MCF 10A (cell line): ENCODE measurements at regions of chr1 and their contacts with region 1.

Region 1: DNA sequence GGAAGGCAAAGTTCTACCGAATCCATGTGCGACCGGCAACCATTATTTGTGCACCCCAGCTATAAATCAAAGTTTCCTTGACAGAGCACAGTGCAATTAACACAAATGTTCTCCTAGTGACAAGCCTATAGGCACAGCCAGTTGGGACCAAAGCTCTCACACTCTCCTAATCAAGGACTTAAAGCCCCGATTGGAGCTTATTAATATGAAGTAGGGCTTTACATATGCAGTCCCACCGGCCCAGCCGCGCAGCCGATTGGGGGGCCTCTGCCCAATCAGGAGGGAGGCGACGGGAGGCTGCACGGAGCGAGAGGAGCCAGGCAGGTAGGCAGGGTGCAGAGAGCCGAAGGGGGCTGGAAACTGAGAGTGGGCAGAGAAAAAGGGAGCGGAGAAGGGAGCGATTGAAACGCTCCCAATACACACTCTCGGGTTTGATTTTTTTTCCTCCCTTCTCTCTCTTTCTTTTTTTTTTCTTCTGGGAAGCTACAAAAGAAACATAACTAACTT is at the start of gene ESRRG:
- DNase-seq: no peak
- H3K4me3 Mint-ChIP-seq: no peak within 1 kb of the TSS
- H3K27ac Mint-ChIP-seq: no peak within 1 kb of the TSS
- H3K4me1 Mint-ChIP-seq: peaks cover 8% of the 10 kb centered on the region
- H3K27me3 Mint-ChIP-seq: peaks cover 100% of the 10 kb centered on the region
- CTCF ChIP-seq: no peak
- total RNA-seq, gene ESRRG: 0.44 TPM in 1 of 2 replicates, not detected in the other

Region 2: DNA sequence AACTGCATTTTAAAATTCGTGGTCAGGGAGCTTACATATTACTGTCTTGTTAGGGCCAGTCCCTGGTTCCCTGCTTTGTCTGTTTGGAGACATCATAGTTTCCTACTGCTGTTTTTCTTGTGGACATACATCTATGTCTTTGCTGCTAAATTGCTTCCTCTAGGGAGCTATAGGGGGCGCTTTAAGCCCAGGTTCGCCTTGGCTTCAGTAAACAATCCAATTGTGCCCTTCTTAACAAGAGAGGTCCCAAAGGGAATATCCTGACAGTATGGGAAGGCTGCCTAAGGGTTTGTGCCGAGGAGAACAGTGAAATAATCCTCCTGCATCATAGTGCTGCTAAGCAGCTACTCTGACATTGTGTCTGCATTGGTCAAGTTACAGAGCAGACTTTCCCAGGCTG is 412.6 kb before region 1 on chr1:
- CTCF ChIA-PET with region 1: interaction called, 5 read pairs
- POLR2A ChIA-PET with region 1: no interaction called
- intact Hi-C with region 1: loop called (anchors 5 kb)
- DNase-seq: peak; percentile 75
- H3K4me3 Mint-ChIP-seq: no peak overlapping the region
- H3K27ac Mint-ChIP-seq: no peak overlapping the region
- H3K4me1 Mint-ChIP-seq: no peaks in the 10 kb centered on the region
- H3K27me3 Mint-ChIP-seq: peaks cover 77% of the 10 kb centered on the region
- CTCF ChIP-seq: peak; percentile 95

Region 3: GRCh38 chr1:216866714-216867113 is 143.4 kb after region 1 on chr1:
- CTCF ChIA-PET with region 1: no interaction called
- POLR2A ChIA-PET with region 1: no interaction called
- intact Hi-C with region 1: no loop called
- DNase-seq: no peak
- H3K4me3 Mint-ChIP-seq: no peak overlapping the region
- H3K27ac Mint-ChIP-seq: no peak overlapping the region
- H3K4me1 Mint-ChIP-seq: no peaks in the 10 kb centered on the region
- H3K27me3 Mint-ChIP-seq: no peaks in the 10 kb centered on the region
- CTCF ChIP-seq: no peak